ENCODE measurements at regions of chr1 and their contacts with region 1.

Region 1: DNA sequence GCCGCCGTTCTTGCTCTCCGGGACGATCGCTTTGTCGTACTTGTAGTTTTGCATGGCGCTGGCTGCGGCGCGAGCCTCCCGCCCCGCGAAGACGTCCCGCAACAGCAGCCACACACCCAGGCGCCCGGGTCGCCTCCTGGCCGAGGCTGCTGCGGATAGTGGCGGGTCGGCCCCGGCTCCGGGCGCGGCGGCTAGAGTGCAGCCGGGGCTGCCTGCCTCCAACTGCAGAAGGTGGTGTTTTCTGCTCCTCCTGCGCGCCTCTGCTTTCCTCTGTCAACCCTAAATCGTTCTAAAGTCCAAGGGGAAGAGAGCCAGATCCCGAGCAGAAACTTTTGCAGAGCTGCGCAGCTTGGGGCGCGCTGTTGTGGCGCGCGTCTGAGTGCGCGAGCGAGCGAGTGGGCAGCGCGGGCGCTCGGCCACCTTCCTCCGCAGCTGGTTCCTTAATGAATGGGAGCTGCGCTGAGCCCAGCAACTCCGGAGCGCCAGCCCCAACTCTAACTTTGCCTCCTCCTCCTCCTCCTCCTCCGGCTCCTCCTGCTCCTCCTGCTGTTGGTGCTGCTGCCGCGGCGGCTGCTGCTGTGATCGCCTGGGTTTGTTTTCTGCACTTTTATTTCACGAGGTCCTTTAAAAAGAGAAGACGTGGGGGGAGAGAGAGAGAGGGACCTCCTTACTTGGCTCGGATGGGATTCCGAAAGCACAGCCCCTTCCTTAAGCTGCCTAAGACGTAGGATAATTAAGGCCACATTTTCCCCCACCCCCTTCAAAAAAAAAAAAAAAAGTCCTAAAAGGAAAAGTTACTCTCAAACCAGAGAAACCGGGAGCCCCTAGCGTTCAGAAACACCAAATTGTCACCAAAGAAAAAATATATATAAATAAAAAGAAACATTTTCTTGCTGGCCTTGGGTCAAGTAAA is at the start of gene PLPP3:
- DNase-seq: peak; percentile 89
- H3K4me3 ChIP-seq: peak within 1 kb of the TSS; percentile 74 to 88
- H3K27ac ChIP-seq: peak within 1 kb of the TSS; percentile 91 to 95
- H3K4me1 ChIP-seq: no peaks in the 10 kb centered on the region
- H3K27me3 ChIP-seq: no peaks in the 10 kb centered on the region
- CTCF ChIP-seq: peak; percentile 30 to 41 (median 40)
- POLR2A ChIP-seq: peak; percentile 84
- total RNA-seq, gene PLPP3: 40.4 to 107 TPM

Region 2: DNA sequence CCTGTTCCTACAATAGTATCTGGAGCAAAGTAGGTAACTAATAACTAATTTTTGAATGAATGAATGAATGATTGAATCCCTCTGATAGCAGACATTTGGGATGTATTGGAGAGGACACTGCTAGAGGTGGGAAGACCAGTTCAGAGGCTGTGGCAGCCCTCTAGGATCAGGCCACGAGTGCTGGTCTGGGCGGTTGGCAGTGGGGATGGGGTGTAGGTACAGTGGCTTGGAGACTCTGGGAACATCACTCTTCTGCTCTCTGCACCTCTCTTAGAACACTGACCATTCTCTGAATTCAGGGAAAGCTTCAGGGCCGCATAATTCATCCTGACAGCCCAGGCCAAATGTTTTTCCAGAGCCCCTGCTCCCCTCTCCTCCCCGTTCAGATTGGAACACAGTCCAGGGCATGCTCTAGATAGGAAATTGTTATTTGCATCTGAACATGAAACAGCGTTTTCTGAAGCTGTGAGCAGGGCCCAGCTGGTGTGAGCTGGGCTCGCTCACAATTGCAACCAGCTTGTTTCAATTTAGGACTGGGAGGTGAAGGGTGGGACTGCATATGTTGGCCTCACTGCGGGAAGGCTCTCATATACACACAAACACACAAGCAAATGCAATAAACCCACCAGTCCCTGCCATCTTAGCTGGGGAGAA is 1111.0 kb before region 1 on chr1:
- intact Hi-C with region 1: loop called (anchors 10 kb)
- DNase-seq: no peak
- H3K4me3 ChIP-seq: no peak overlapping the region
- H3K27ac ChIP-seq: no peak overlapping the region
- H3K4me1 ChIP-seq: no peaks in the 10 kb centered on the region
- H3K27me3 ChIP-seq: no peaks in the 10 kb centered on the region
- CTCF ChIP-seq: no peak
- POLR2A ChIP-seq: no peak

Region 3: DNA sequence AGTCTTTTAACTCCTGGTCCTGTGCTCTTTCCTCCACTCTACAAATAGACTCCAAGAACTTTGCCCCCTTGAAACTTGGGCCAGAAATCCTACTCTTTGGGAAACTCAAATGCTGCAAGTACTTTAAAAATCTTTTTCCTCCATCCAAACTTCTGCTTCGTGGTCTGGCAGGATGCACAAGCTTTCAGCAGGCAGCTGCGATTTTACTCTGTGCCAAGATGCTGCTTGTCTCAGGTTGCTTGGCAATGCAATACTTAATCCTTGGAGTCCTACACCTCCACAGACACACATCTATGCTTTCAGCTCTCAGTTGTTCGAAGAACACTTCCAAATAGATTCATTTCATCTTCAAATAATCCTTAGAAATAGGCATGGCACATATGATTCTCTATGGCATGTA is 928.8 kb before region 1 on chr1:
- intact Hi-C with region 1: loop called (anchors 5 kb)
- DNase-seq: no peak
- H3K4me3 ChIP-seq: no peak overlapping the region
- H3K27ac ChIP-seq: no peak overlapping the region
- H3K4me1 ChIP-seq: no peaks in the 10 kb centered on the region
- H3K27me3 ChIP-seq: no peaks in the 10 kb centered on the region
- CTCF ChIP-seq: no peak
- POLR2A ChIP-seq: no peak

Region 4: GRCh38 chr1:55974714-55975511 is 604.3 kb before region 1 on chr1:
- intact Hi-C with region 1: loop called (anchors 5 kb)
- DNase-seq: no peak
- H3K4me3 ChIP-seq: no peak overlapping the region
- H3K27ac ChIP-seq: peak overlapping the region; percentile 17 to 45
- H3K4me1 ChIP-seq: no peaks in the 10 kb centered on the region
- H3K27me3 ChIP-seq: no peaks in the 10 kb centered on the region
- CTCF ChIP-seq: no peak
- POLR2A ChIP-seq: no peak

Region 5: DNA sequence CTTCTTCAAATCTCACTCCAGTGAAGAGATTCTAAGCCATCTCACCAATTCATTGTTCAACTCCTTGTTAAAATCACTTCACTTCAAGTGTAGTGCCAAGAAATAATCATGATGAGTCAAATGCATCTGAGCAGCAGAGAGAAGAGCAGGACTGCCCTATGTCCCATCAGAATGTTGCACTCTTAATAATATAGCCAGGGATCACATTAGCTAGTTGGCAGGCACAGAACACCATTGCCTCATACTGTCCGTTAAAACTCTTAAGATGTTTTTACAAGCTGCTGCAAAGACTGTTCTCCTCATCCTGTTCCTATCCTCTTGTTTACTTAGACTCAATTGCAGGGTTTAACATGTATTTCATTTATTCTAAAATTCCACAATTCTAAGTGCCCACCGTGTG is 432.8 kb before region 1 on chr1:
- intact Hi-C with region 1: loop called (anchors 2 kb)
- DNase-seq: peak; percentile 22
- H3K4me3 ChIP-seq: no peak overlapping the region
- H3K27ac ChIP-seq: peak overlapping the region; percentile 34 to 35
- H3K4me1 ChIP-seq: no peaks in the 10 kb centered on the region
- H3K27me3 ChIP-seq: no peaks in the 10 kb centered on the region
- CTCF ChIP-seq: no peak
- POLR2A ChIP-seq: no peak

Region 6: DNA sequence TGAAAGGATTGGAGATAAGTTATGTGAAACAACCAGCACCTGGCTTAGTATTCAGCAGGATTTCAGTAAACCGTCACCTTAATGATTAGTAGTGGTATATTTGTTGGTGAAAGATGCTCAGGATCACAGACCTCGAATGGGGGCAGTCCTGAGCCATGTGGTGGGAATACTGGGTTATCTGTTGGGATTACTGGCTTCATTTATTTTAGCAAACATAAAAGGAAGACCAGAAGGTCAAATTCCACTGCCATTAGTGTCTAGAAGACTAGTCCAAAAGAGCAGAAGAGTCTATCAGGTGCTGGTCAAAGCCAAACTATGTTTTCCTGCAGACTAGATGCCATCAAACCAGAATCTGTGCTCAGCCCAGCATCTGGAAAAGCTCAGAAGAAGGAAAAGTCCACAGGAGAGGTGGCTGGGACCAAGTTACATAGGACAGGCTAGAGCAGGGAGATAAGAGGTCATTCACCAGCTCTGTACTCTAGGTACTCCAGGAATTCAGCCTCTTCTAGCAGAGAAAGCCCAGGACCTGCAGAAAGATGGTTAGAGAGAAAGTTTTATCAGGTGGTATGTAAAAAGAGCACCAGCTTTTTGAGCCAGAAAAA is 343.2 kb before region 1 on chr1:
- intact Hi-C with region 1: no loop called
- DNase-seq: no peak
- H3K4me3 ChIP-seq: no peak overlapping the region
- H3K27ac ChIP-seq: no peak overlapping the region
- H3K4me1 ChIP-seq: no peaks in the 10 kb centered on the region
- H3K27me3 ChIP-seq: no peaks in the 10 kb centered on the region
- CTCF ChIP-seq: no peak
- POLR2A ChIP-seq: no peak

Region 7: DNA sequence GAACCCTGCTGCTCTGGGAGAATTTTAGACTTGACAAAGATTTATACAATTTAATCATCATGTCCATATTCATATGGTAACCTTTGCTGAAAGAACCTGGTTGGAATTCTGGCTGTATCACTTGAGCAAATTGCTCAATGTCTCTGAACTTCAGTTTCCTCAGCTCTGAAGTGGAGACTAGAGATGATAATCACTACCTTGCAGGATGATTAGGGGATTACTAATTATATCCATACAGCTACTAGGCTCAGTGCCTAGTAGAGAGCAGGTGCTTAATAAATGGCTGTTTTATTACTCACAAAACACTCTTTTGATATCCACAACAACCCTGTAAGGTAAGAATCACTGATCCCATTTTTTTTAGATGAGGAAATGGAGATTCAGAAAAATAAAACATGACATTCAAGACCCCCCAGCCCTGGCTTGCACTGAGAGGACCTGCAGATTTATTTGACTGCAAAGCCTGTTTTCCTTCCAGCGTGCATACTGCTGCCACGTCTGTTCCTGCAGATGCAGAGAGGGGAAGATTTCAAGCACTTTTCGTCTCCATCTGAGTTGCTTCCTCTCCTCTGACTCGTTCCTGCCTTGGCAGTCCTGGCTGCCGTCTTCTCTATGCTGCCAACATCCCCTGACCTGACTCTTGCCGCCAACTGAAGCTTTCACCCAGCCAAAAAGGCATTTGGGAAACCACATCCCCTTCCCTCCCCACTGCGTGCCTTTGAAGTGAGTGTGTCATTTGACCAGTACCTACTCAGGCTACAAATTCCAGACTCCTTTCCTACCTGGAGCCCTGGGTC is 202.8 kb before region 1 on chr1:
- intact Hi-C with region 1: loop called (anchors 5 kb)
- DNase-seq: peak; percentile 66
- H3K4me3 ChIP-seq: no peak overlapping the region
- H3K27ac ChIP-seq: peak overlapping the region; percentile 35 to 39
- H3K4me1 ChIP-seq: peaks cover 3% of the 10 kb centered on the region
- H3K27me3 ChIP-seq: no peaks in the 10 kb centered on the region
- CTCF ChIP-seq: no peak
- POLR2A ChIP-seq: no peak

Region 8: GRCh38 chr1:56686171-56686570 is 107.0 kb after region 1 on chr1:
- intact Hi-C with region 1: no loop called
- DNase-seq: no peak
- H3K4me3 ChIP-seq: no peak overlapping the region
- H3K27ac ChIP-seq: no peak overlapping the region
- H3K4me1 ChIP-seq: no peaks in the 10 kb centered on the region
- H3K27me3 ChIP-seq: no peaks in the 10 kb centered on the region
- CTCF ChIP-seq: no peak
- POLR2A ChIP-seq: no peak

Measured in prostate gland (tissue), 2 donors.